ENCODE measurements at regions of chr11 and their contacts with region 1.

Region 1: GRCh38 chr11:93784152-93784934 is at the start of gene MED17:
- DNase-seq: peak; percentile 85 to 90
- H3K4me3 ChIP-seq: peak within 1 kb of the TSS; percentile 91
- H3K27ac ChIP-seq: peak within 1 kb of the TSS; percentile 82
- H3K4me1 ChIP-seq: peaks cover 30% of the 10 kb centered on the region
- H3K27me3 ChIP-seq: no peaks in the 10 kb centered on the region
- CTCF ChIP-seq: peak; percentile 53; the same call in 1 of the 2 replicates
- total RNA-seq, gene MED17: 26.9 and 37.4 TPM in 2 replicates

Region 2: GRCh38 chr11:93817426-93818348 is 33.3 kb after region 1 on chr11:
- CTCF ChIA-PET with region 1: no interaction called
- POLR2A ChIA-PET with region 1: no interaction called
- intact Hi-C with region 1: no loop called
- DNase-seq: peak; percentile 55 to 96
- H3K4me3 ChIP-seq: peak overlapping the region; percentile 5; the same call in 1 of the 2 replicates
- H3K27ac ChIP-seq: peak overlapping the region; percentile 48
- H3K4me1 ChIP-seq: peaks cover 25% of the 10 kb centered on the region
- H3K27me3 ChIP-seq: no peaks in the 10 kb centered on the region
- CTCF ChIP-seq: no peak

Region 3: GRCh38 chr11:94120946-94121345 is 336.6 kb after region 1 on chr11:
- CTCF ChIA-PET with region 1: no interaction called
- POLR2A ChIA-PET with region 1: interaction called, 12 read pairs
- intact Hi-C with region 1: no loop called
- DNase-seq: no peak
- H3K4me3 ChIP-seq: no peak overlapping the region
- H3K27ac ChIP-seq: no peak overlapping the region
- H3K4me1 ChIP-seq: peaks cover 9% of the 10 kb centered on the region
- H3K27me3 ChIP-seq: no peaks in the 10 kb centered on the region
- CTCF ChIP-seq: no peak

Measured in PC-9 (cell line).